PC-9 (cell line): ENCODE measurements at regions of chr3 and their contacts with region 1.

Region 1: GRCh38 chr3:127473244-127474024 is 117.1 kb downstream of the TPRA1 start:
- DNase-seq: peak in 1 of 2 experiments; percentile 58
- H3K4me3 ChIP-seq: no peak overlapping the region
- H3K27ac ChIP-seq: no peak overlapping the region
- H3K4me1 ChIP-seq: no peaks in the 10 kb centered on the region
- H3K27me3 ChIP-seq: peaks cover 43% of the 10 kb centered on the region
- CTCF ChIP-seq: peak; percentile 58

Region 2: DNA sequence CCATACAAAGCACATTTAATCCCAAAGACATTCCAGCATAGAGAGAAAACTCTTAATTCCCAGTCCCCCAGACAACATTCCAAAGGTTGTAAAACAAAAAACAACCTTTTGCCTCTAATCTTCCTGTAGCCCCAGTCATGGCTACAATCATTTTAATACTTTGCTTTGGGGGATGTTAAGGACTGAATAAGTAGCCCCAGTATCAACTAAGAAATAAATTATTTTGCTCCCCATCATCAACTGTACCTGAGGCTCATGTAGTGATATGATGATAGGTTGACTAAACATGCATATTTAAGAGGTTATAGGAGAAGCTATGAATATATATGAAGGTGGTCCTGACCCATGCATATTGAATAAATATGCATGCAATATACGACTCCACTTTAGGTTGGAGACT is 226.1 kb before region 1 on chr3:
- CTCF ChIA-PET with region 1: no interaction called
- POLR2A ChIA-PET with region 1: no interaction called
- intact Hi-C with region 1: no loop called
- DNase-seq: no peak
- H3K4me3 ChIP-seq: no peak overlapping the region
- H3K27ac ChIP-seq: no peak overlapping the region
- H3K4me1 ChIP-seq: no peaks in the 10 kb centered on the region
- H3K27me3 ChIP-seq: no peaks in the 10 kb centered on the region
- CTCF ChIP-seq: no peak

Region 3: GRCh38 chr3:127395663-127396355 is 77.6 kb before region 1 on chr3:
- CTCF ChIA-PET with region 1: no interaction called
- POLR2A ChIA-PET with region 1: interaction called, 13 read pairs
- intact Hi-C with region 1: no loop called
- DNase-seq: peak in 1 of 2 experiments; percentile 29
- H3K4me3 ChIP-seq: no peak overlapping the region
- H3K27ac ChIP-seq: no peak overlapping the region
- H3K4me1 ChIP-seq: no peaks in the 10 kb centered on the region
- H3K27me3 ChIP-seq: peaks cover 7% of the 10 kb centered on the region
- CTCF ChIP-seq: no peak